K562 (cell line): ENCODE measurements at regions of chr15 and their contacts with region 1.

Region 1: GRCh38 chr15:77024271-77025082 is 29.6 kb downstream of the PSTPIP1 start:
- DNase-seq: peak; percentile 73 to 87 (median 84)
- ATAC-seq: peak; percentile 80
- H3K4me3 ChIP-seq: no peak overlapping the region
- H3K27ac ChIP-seq: no peak overlapping the region
- H3K4me1 ChIP-seq: peaks cover 0 to 32% of the 10 kb centered on the region in 2 experiments; a peak in 2 of 5 replicates
- H3K27me3 ChIP-seq: peaks cover 0 to 36% of the 10 kb centered on the region in 2 experiments; a peak in 3 of 5 replicates
- CTCF ChIP-seq: peak; percentile 82 to 94 (median 90)
- EP300 ChIP-seq: no peak
- POLR2A ChIP-seq: no peak
- RAD21 ChIP-seq: peak; percentile 72 to 83

Region 2: GRCh38 chr15:76904461-76905012 is 119.9 kb before region 1 on chr15:
- CTCF ChIA-PET with region 1: no interaction called
- POLR2A ChIA-PET with region 1: no interaction called
- in situ Hi-C with region 1: no loop called
- intact Hi-C with region 1: loop called (anchors 5 kb)
- DNase-seq: peak in 2 of 4 experiments; percentile 18 to 23
- ATAC-seq: peak; percentile 39
- H3K4me3 ChIP-seq: peak overlapping the region; percentile 84
- H3K27ac ChIP-seq: peak overlapping the region; percentile 80
- H3K4me1 ChIP-seq: peaks cover 10 to 16% of the 10 kb centered on the region in 2 experiments; a peak in 4 of 5 replicates
- H3K27me3 ChIP-seq: no peaks in the 10 kb centered on the region
- CTCF ChIP-seq: no peak
- EP300 ChIP-seq: no peak
- POLR2A ChIP-seq: no peak
- RAD21 ChIP-seq: no peak

Region 3: DNA sequence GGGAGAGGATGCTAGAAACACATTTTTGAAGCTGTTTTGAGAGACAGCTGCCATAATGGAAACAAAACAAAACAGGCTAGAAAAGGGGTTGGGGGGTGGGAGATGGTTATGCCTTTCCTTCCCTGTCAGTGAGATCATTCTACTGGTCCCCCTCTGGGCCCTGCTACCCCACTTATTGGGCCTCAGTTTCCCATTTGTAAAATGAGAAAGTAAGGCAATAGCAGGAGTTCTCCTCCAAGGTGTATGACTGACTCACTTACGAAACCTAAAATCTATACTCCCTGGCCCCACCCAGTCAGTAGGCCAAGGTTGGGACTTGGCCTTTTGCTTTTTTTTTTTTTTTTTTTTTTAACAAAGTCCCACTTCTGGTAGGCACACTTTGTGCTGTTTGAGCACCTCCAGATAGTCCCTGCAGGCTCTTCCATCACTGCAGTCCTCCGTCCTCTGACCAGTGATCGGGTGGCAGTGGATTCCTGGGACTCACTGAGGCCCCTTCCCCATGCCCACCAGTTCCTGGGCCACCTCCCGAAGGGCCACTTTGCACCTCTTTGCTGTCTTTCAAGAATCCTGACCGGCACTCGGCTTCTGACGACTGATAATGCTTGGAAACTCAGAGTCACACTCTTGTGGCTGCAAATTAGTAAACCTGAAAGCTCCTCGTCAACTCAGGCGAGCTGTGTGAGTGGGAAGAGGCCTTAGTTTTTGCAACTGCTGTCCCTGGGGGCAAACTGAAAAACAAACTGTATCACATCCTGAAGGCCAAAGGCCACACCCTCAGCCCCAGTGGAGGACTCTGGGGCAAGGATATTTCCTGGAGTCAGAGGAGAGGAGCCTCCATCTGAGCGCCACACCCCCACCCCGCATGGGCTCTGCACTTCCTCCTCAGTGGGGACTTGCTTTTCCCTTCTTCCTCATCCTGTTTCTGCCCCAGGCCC is 36.3 kb before region 1 on chr15:
- CTCF ChIA-PET with region 1: no interaction called
- POLR2A ChIA-PET with region 1: no interaction called
- in situ Hi-C with region 1: no loop called
- intact Hi-C with region 1: no loop called
- DNase-seq: peak; percentile 33 to 52 (median 36)
- ATAC-seq: peak; percentile 76
- H3K4me3 ChIP-seq: no peak overlapping the region
- H3K27ac ChIP-seq: no peak overlapping the region
- H3K4me1 ChIP-seq: peaks cover 0 to 6% of the 10 kb centered on the region in 2 experiments; a peak in 2 of 5 replicates
- H3K27me3 ChIP-seq: peaks cover 10 to 39% of the 10 kb centered on the region in 2 experiments; a peak in 4 of 5 replicates
- CTCF ChIP-seq: no peak
- EP300 ChIP-seq: no peak
- POLR2A ChIP-seq: no peak
- RAD21 ChIP-seq: no peak

Region 4: DNA sequence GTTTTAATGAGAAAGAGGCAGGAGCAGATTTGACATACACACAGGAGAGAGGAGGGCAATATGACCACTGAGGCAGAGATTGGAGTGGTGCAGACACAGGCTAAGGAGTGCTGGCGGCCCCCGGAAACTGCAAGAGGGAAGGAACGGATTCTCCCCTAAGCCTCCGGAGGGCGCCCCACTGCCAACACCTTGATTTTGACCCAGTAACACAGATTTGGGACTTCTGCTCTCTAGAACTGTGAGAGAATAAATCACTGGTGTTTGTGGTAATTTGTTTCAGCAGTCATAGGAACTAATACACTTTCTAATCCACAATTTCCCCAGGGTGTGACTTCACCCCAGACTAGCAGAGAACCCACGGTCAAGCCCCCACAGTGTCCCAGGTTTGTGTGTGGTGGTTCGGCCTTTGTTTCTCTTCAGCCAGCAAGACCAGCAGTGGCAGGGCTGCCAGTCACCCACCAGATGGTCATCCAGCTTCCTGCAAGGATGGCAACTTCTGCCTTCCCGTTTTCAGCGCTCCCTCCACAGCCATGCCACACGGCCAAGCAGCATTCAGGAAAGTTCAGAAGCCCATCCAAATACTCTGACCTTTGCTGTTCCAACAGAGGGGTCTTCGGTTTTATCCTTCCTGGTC is 70.0 kb after region 1 on chr15:
- CTCF ChIA-PET with region 1: no interaction called
- POLR2A ChIA-PET with region 1: no interaction called
- in situ Hi-C with region 1: no loop called
- intact Hi-C with region 1: loop called (anchors 5 kb)
- DNase-seq: peak in 2 of 4 experiments; percentile 38 to 42
- ATAC-seq: peak; percentile 76
- H3K4me3 ChIP-seq: no peak overlapping the region
- H3K27ac ChIP-seq: no peak overlapping the region
- H3K4me1 ChIP-seq: no peaks in the 10 kb centered on the region
- H3K27me3 ChIP-seq: peaks cover 3 to 26% of the 10 kb centered on the region in 2 experiments; a peak in 3 of 5 replicates
- CTCF ChIP-seq: peak; percentile 50 to 57 (median 55); a peak in 5 of 6 replicates
- EP300 ChIP-seq: no peak
- POLR2A ChIP-seq: no peak
- RAD21 ChIP-seq: peak in 1 of 2 experiments; percentile 28; a peak in 1 of 4 replicates

Region 5: DNA sequence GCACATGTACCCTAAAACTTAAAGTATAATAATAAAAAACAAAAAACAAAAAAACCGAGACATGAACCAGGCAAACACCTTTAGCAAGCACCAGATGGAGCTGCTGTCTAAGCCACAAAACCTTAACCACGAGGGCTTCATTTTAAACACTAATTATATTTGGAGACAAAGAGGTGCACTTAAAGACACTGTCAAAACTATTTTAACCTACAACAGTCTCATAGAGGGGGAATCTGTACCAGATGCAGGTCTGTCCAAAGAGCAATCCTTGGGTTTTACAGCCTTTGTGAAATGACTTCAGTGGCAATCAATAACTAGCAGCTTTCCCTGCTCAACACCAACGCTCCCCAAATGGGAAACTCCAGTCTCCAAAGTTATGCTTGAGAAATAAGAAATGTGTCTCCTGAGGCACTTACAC is 162.1 kb after region 1 on chr15:
- CTCF ChIA-PET with region 1: no interaction called
- POLR2A ChIA-PET with region 1: no interaction called
- in situ Hi-C with region 1: no loop called
- intact Hi-C with region 1: loop called (anchors 10 kb)
- DNase-seq: peak in 3 of 4 experiments; percentile 13 to 45 (median 27)
- ATAC-seq: peak; percentile 50; the same call in 1 of the 3 replicates
- H3K4me3 ChIP-seq: no peak overlapping the region
- H3K27ac ChIP-seq: no peak overlapping the region
- H3K4me1 ChIP-seq: peaks cover 0 to 25% of the 10 kb centered on the region in 2 experiments; a peak in 3 of 5 replicates
- H3K27me3 ChIP-seq: no peaks in the 10 kb centered on the region
- CTCF ChIP-seq: peak; percentile 55 to 74 (median 59); a peak in 5 of 6 replicates
- EP300 ChIP-seq: no peak
- POLR2A ChIP-seq: no peak
- RAD21 ChIP-seq: peak; percentile 82 to 86

Region 6: DNA sequence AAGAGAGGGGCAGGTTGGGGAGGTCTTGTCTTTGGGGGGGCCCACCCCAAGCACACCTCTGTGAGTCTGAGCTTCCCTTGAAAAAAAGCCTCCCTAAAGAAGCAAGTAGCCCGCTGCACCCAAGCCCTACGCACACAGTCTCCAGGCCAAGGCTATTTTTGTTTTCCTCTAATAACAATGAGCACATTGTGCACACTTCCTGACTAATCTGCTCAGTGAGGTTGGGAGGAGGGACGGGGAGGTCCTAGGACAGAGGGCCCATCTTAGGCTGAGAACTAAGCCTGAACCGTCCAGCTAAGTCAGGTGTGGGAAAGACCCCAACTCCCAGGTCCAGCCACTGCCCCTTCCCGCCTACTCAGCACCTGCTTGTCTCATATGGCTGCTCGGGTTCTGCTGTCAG is 483.4 kb after region 1 on chr15:
- CTCF ChIA-PET with region 1: no interaction called
- POLR2A ChIA-PET with region 1: no interaction called
- in situ Hi-C with region 1: loop called (anchors 10 kb)
- intact Hi-C with region 1: no loop called
- DNase-seq: no peak
- ATAC-seq: no peak
- H3K4me3 ChIP-seq: no peak overlapping the region
- H3K27ac ChIP-seq: no peak overlapping the region
- H3K4me1 ChIP-seq: peaks cover 5 to 6% of the 10 kb centered on the region in 2 experiments; a peak in 3 of 5 replicates
- H3K27me3 ChIP-seq: peaks cover 0 to 29% of the 10 kb centered on the region in 2 experiments; a peak in 2 of 5 replicates
- CTCF ChIP-seq: no peak
- EP300 ChIP-seq: no peak
- POLR2A ChIP-seq: no peak
- RAD21 ChIP-seq: no peak